Common myeloid progenitor, CD34-positive (primary cell): ENCODE measurements at regions of chr2 and their contacts with region 1.

Region 1: GRCh38 chr2:27050281-27050995 is 1.0 kb upstream of the AGBL5 start:
- DNase-seq: peak; percentile 92 to 98 (median 97)
- H3K4me3 ChIP-seq: peak overlapping the region; percentile 82 to 98 (median 93)
- H3K27ac ChIP-seq: peak overlapping the region; percentile 43 to 86
- H3K4me1 ChIP-seq: peaks cover 2 to 24% (median 21%) of the 10 kb centered on the region in 4 experiments
- H3K27me3 ChIP-seq: no peaks in the 10 kb centered on the region

Region 2: GRCh38 chr2:27032495-27033252 is 17.8 kb before region 1 on chr2 and contains the start of gene TMEM214:
- CTCF ChIA-PET with region 1: interaction called, 76 read pairs
- POLR2A ChIA-PET with region 1: interaction called, 7 read pairs
- DNase-seq: peak; percentile 55 to 67 (median 62)
- H3K4me3 ChIP-seq: peak within 1 kb of the TSS; percentile 85 to 98 (median 92)
- H3K27ac ChIP-seq: peak within 1 kb of the TSS; percentile 6 to 89
- H3K4me1 ChIP-seq: peaks cover 4 to 17% (median 16%) of the 10 kb centered on the region in 4 experiments
- H3K27me3 ChIP-seq: no peaks in the 10 kb centered on the region

Region 3: DNA sequence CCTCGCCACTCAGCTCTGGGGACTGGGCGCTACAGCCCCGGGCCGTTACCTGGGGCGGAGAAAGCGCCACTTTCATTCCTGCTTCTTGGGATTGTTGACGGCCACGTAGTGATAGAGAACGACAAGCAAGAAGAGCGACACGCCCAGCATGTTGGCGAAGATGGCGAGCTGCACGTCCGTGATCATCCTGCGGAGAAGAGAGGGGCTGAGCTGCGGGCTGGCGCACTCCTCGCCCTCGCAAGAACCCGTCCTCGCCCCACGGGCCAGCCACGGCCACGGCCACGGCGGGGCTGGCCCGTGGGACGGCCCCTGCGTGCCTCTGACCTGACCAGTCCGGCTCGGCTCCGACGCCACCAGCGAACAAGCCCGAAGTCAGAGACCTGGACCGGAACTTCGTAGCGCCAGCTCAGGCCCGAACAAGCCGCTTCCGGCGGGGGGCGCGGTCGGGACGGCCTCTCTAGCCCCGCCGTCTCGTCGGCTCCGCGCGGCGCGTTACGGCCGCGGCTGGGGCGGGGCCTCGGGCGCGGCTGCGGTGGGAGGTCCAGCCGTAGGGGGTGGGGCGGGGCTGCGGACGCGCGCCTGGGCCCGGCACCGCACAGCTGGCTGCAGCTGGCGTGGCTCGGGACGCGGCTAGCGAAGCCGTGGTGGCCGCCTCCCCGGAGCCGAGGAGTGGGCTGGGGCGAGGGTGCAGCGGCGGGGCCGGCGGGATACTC is 21.0 kb after region 1 on chr2 and contains the start of gene OST4:
- CTCF ChIA-PET with region 1: interaction called, 381 read pairs
- POLR2A ChIA-PET with region 1: interaction called, 16 read pairs
- DNase-seq: peak; percentile 90 to 94 (median 94)
- H3K4me3 ChIP-seq: peak within 1 kb of the TSS; percentile 71 to 98 (median 96)
- H3K27ac ChIP-seq: peak within 1 kb of the TSS; percentile 84 to 92
- H3K4me1 ChIP-seq: peaks cover 13 to 63% (median 55%) of the 10 kb centered on the region in 4 experiments
- H3K27me3 ChIP-seq: no peaks in the 10 kb centered on the region

Region 4: DNA sequence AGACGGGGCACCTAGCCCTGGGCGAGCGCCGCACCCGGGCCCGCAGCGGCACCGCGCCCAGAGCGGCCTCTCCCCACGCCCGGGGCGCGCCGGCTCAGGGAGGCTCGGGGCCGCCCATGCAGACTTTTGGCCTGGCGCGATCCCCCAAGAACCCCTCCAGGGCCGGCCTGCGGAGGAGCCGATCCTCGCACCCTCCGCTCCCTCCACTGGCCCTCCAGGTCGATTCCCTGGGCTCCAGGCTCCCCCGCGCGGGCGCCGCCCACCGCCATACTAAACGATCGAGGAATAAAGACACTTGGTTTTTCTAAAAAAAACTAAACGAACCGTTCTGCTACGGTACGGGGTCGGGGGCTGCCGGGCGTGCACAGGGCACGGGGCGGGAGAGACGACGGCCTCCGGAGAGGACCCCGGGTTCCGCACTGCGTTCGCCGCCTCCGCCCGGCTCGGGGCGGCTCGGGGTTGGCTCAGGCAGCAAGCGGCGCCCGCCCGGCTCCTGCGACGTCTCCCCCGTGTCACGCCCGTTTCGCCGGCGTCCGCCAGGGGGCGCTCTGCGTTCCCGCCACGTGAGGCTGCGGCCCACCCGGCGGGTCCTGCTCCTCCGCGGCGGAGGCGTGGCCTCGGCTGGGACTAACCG is 35.8 kb after region 1 on chr2:
- CTCF ChIA-PET with region 1: interaction called, 381 read pairs
- POLR2A ChIA-PET with region 1: interaction called, 7 read pairs
- DNase-seq: peak; percentile 93 to 96 (median 95)
- H3K4me3 ChIP-seq: peak overlapping the region; percentile 43 to 77 (median 65)
- H3K27ac ChIP-seq: peak overlapping the region in 1 of 2 experiments; percentile 66
- H3K4me1 ChIP-seq: peaks cover 5 to 55% (median 44%) of the 10 kb centered on the region in 4 experiments
- H3K27me3 ChIP-seq: no peaks in the 10 kb centered on the region

Region 5: GRCh38 chr2:27162151-27163121 is 112.0 kb after region 1 on chr2:
- CTCF ChIA-PET with region 1: no interaction called
- POLR2A ChIA-PET with region 1: no interaction called
- DNase-seq: no peak
- H3K4me3 ChIP-seq: no peak overlapping the region
- H3K27ac ChIP-seq: no peak overlapping the region
- H3K4me1 ChIP-seq: no peaks in the 10 kb centered on the region
- H3K27me3 ChIP-seq: no peaks in the 10 kb centered on the region